ENCODE measurements at regions of chr9 and their contacts with region 1.

Region 1: DNA sequence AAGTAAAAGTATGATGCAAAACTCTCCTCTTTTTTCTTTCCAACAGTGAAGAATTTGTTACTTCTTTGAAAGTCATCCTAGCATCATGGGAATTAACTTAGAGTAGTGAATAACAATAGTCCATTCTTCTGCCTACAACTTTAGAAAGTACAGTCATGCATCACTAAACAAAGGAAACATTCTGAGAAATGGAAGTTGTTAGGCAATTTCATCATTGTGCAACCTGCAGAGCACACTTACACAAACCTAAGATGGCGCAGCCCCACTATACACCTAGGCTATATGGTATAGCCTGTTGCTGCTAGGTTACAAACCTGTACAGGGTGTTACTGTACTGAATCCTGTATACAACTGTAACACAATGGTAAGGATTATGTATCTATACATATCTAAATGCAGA is 1209.3 kb upstream of the C9orf72 start:
- DNase-seq: no peak
- H3K4me3 ChIP-seq: no peak overlapping the region
- H3K27ac ChIP-seq: no peak overlapping the region
- H3K4me1 ChIP-seq: no peaks in the 10 kb centered on the region
- H3K27me3 ChIP-seq: no peaks in the 10 kb centered on the region
- CTCF ChIP-seq: no peak
- POLR2A ChIP-seq: no peak

Region 2: GRCh38 chr9:28668158-28668557 is 114.5 kb before region 1 on chr9:
- intact Hi-C with region 1: no loop called
- DNase-seq: no peak
- H3K4me3 ChIP-seq: no peak overlapping the region
- H3K27ac ChIP-seq: no peak overlapping the region
- H3K4me1 ChIP-seq: no peaks in the 10 kb centered on the region
- H3K27me3 ChIP-seq: no peaks in the 10 kb centered on the region
- CTCF ChIP-seq: no peak
- POLR2A ChIP-seq: no peak

Region 3: DNA sequence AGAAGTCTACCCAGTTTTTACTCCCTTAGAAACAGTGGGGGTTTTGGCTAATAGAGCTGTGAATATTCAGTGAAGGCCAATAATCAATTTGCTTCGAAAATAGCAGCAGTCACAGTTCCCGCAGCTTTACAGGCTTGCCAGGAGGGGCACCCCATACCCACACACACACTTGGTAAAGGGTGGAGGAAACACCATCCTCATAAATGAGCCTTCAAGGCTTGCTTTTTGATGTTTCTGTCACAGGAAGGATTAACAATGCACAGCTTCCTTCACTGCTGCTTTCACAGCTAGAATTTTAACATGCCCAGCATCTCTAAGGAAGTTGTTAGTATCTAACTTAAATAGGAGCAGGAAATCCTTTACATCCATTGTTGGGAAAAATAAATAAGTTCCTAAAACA is 38.1 kb after region 1 on chr9:
- intact Hi-C with region 1: no loop called
- DNase-seq: no peak
- H3K4me3 ChIP-seq: no peak overlapping the region
- H3K27ac ChIP-seq: no peak overlapping the region
- H3K4me1 ChIP-seq: no peaks in the 10 kb centered on the region
- H3K27me3 ChIP-seq: no peaks in the 10 kb centered on the region
- CTCF ChIP-seq: no peak
- POLR2A ChIP-seq: no peak

Region 4: DNA sequence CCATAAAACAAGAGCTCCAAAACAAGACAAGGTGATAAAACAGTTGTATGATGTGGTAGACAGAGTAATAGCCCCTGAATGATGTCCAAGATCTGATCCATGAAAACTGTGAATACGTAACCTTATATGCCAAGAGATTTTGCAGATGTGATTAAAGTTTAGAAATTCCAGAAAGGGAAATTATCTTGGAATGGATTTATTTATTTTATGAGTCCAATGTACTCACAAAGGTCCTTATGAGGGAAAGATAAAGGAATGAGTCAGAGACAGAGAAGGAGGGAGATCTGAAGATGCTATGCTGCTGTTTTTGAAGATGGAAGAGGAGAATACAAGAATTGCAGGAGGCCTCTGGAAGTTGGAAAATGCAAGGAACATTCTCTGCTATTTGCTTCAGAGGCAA is 566.4 kb after region 1 on chr9:
- intact Hi-C with region 1: loop called (anchors 5 kb)
- DNase-seq: no peak
- H3K4me3 ChIP-seq: no peak overlapping the region
- H3K27ac ChIP-seq: no peak overlapping the region
- H3K4me1 ChIP-seq: no peaks in the 10 kb centered on the region
- H3K27me3 ChIP-seq: no peaks in the 10 kb centered on the region
- CTCF ChIP-seq: no peak
- POLR2A ChIP-seq: no peak

Region 5: GRCh38 chr9:29939559-29939958 is 1156.9 kb after region 1 on chr9:
- intact Hi-C with region 1: loop called (anchors 10 kb)
- DNase-seq: no peak
- H3K4me3 ChIP-seq: no peak overlapping the region
- H3K27ac ChIP-seq: no peak overlapping the region
- H3K4me1 ChIP-seq: no peaks in the 10 kb centered on the region
- H3K27me3 ChIP-seq: no peaks in the 10 kb centered on the region
- CTCF ChIP-seq: no peak
- POLR2A ChIP-seq: no peak